CD4-positive, alpha-beta T cell (primary cell): ENCODE measurements at regions of chrX and their contacts with region 1.

Region 1: GRCh38 chrX:43836435-43837184 is 45.6 kb downstream of the MAOB start:
- DNase-seq: peak in 3 of 14 experiments; percentile 25 to 32 (median 32)
- ATAC-seq: no peak
- H3K4me3 ChIP-seq: no peak overlapping the region
- H3K4me3 Mint-ChIP-seq: no peak overlapping the region
- H3K27ac ChIP-seq: no peak overlapping the region
- H3K27ac Mint-ChIP-seq: no peak overlapping the region
- H3K4me1 ChIP-seq: no peaks in the 10 kb centered on the region
- H3K4me1 Mint-ChIP-seq: no peaks in the 10 kb centered on the region
- H3K27me3 ChIP-seq: peaks cover 0 to 3% of the 10 kb centered on the region in 2 experiments
- H3K27me3 Mint-ChIP-seq: no peaks in the 10 kb centered on the region
- CTCF ChIP-seq: peak; percentile 63

Region 2: DNA sequence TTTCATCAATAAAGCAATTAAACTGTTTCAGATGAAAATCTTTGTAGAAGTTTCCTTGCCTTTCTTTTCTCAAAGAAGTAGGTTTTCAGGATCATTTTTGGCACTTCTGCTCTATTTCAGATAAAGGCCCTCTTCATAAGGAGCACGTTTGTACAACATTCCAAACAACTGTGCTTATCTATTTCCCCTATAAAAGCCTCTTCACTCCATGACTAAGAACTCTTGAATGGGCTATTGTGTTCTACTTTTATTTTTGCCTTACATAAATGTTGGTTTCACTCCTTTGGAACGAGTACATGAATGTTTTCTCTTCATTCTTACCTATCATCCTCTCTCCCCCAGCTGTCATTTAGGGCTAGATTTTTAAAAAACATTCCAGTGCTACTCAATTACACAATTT is 770.6 kb before region 1 on chrX:
- CTCF ChIA-PET with region 1: no interaction called
- POLR2A ChIA-PET with region 1: no interaction called
- intact Hi-C with region 1: no loop called
- DNase-seq: no peak
- ATAC-seq: no peak
- H3K4me3 ChIP-seq: no peak overlapping the region
- H3K4me3 Mint-ChIP-seq: no peak overlapping the region
- H3K27ac ChIP-seq: no peak overlapping the region
- H3K27ac Mint-ChIP-seq: no peak overlapping the region
- H3K4me1 ChIP-seq: no peaks in the 10 kb centered on the region
- H3K4me1 Mint-ChIP-seq: no peaks in the 10 kb centered on the region
- H3K27me3 ChIP-seq: no peaks in the 10 kb centered on the region
- H3K27me3 Mint-ChIP-seq: no peaks in the 10 kb centered on the region
- CTCF ChIP-seq: no peak

Region 3: GRCh38 chrX:43436517-43436916 is 400.1 kb before region 1 on chrX:
- CTCF ChIA-PET with region 1: no interaction called
- POLR2A ChIA-PET with region 1: no interaction called
- intact Hi-C with region 1: no loop called
- DNase-seq: peak in 3 of 14 experiments; percentile 0 to 7 (median 2)
- ATAC-seq: no peak
- H3K4me3 ChIP-seq: no peak overlapping the region
- H3K4me3 Mint-ChIP-seq: no peak overlapping the region
- H3K27ac ChIP-seq: no peak overlapping the region
- H3K27ac Mint-ChIP-seq: no peak overlapping the region
- H3K4me1 ChIP-seq: peaks cover 4% of the 10 kb centered on the region
- H3K4me1 Mint-ChIP-seq: peaks cover 4% of the 10 kb centered on the region
- H3K27me3 ChIP-seq: no peaks in the 10 kb centered on the region
- H3K27me3 Mint-ChIP-seq: peaks cover 34% of the 10 kb centered on the region
- CTCF ChIP-seq: no peak

Region 4: GRCh38 chrX:45186643-45187026 is 1350.0 kb after region 1 on chrX:
- CTCF ChIA-PET with region 1: no interaction called
- POLR2A ChIA-PET with region 1: no interaction called
- intact Hi-C with region 1: loop called in 1 of 2 experiments (anchors 10 kb)
- DNase-seq: no peak
- ATAC-seq: no peak
- H3K4me3 ChIP-seq: peak overlapping the region; percentile 63
- H3K4me3 Mint-ChIP-seq: peak overlapping the region; percentile 87
- H3K27ac ChIP-seq: no peak overlapping the region
- H3K27ac Mint-ChIP-seq: peak overlapping the region; percentile 29
- H3K4me1 ChIP-seq: peaks cover 4% of the 10 kb centered on the region
- H3K4me1 Mint-ChIP-seq: peaks cover 27% of the 10 kb centered on the region
- H3K27me3 ChIP-seq: no peaks in the 10 kb centered on the region
- H3K27me3 Mint-ChIP-seq: no peaks in the 10 kb centered on the region
- CTCF ChIP-seq: no peak

Region 5: GRCh38 chrX:45743081-45743533 is 1906.5 kb after region 1 on chrX:
- CTCF ChIA-PET with region 1: no interaction called
- POLR2A ChIA-PET with region 1: no interaction called
- intact Hi-C with region 1: loop called in 1 of 2 experiments (anchors 10 kb)
- DNase-seq: peak in 1 of 14 experiments; percentile 20
- ATAC-seq: no peak
- H3K4me3 ChIP-seq: no peak overlapping the region
- H3K4me3 Mint-ChIP-seq: no peak overlapping the region
- H3K27ac ChIP-seq: no peak overlapping the region
- H3K27ac Mint-ChIP-seq: no peak overlapping the region
- H3K4me1 ChIP-seq: no peaks in the 10 kb centered on the region
- H3K4me1 Mint-ChIP-seq: peaks cover 3% of the 10 kb centered on the region
- H3K27me3 ChIP-seq: no peaks in the 10 kb centered on the region
- H3K27me3 Mint-ChIP-seq: no peaks in the 10 kb centered on the region
- CTCF ChIP-seq: no peak